PC-9 (cell line): ENCODE measurements at regions of chr10 and their contacts with region 1.

Region 1: GRCh38 chr10:69425511-69426298 is 9.0 kb upstream of the TACR2 start:
- DNase-seq: peak; percentile 69 to 98
- H3K4me3 ChIP-seq: no peak overlapping the region
- H3K27ac ChIP-seq: peak overlapping the region; percentile 44
- H3K4me1 ChIP-seq: peaks cover 28% of the 10 kb centered on the region
- H3K27me3 ChIP-seq: peaks cover 10% of the 10 kb centered on the region; the same call in 1 of the 2 replicates
- CTCF ChIP-seq: no peak

Region 2: DNA sequence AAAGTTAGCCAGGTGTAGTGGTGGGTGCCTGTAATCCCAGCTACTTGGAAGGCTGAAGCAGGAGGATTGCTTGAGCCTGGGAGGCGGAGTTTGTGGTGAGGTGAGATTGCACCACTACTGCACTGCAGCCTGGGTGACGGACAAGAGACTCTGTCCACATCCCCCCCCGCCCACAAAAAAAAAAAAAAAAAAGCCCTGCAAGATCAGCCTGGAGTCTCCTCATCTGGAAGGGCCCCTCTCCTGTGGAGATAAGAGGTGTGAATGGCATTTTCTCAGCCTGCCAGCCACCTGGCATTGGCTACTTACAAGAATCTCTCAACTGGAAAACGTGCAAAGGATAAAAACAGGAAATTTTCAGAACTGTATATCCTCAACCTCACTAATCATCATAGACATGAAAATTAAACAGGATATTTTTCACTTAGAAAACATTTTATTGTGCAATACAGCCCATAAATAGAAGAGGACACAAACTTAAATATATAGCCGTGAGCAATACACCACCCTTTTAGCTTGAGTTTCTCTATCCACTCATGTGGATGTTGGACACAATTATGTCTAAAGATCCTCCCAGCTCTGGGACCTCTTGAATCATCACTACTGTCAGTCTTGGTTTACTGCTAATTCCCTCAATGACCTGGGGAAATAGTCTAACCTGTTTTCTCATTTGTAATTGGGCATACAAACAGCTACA is 14.3 kb after region 1 on chr10:
- CTCF ChIA-PET with region 1: interaction called, 6 read pairs
- POLR2A ChIA-PET with region 1: interaction called, 6 read pairs
- intact Hi-C with region 1: loop called (anchors 1 kb)
- DNase-seq: peak; percentile 81 to 96
- H3K4me3 ChIP-seq: peak overlapping the region; percentile 42; the same call in 1 of the 2 replicates
- H3K27ac ChIP-seq: peak overlapping the region; percentile 96
- H3K4me1 ChIP-seq: peaks cover 69% of the 10 kb centered on the region
- H3K27me3 ChIP-seq: no peaks in the 10 kb centered on the region
- CTCF ChIP-seq: 0 out of 2 replicates have a peak, but pooled peaks have one; percentile 4

Region 3: DNA sequence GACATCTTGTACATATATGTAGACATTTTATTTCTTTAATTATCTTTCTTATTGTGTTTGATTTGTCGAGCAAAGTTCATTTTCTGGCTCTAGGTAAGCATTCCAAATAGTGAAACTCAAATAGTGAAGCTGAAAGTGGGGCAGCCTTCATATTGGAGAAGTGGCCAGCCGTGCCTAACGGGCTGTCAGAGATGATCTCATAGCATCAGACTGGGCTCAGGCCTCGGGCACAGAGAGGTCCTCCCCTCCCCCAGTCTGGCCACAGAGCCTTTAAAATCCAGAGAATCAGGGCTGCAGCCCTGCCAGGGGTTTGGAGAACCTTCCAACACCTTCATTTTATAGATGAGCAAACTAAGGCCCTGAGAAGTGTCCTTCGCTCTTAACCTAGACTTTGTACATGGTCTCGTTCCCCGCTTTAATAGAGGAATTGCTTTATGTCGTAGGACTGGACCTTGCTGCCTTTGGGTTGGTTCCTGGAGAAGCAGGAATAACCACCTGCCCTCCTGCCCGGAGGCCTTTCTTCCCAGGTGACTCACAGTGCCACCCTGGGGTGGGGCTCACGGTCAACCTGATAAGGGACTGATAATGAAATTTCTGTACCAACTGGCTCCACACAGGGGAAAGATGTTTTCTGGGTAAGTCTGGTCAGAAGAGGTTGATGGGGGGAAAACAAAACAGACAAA is 32.9 kb after region 1 on chr10:
- CTCF ChIA-PET with region 1: no interaction called
- POLR2A ChIA-PET with region 1: interaction called, 3 read pairs
- intact Hi-C with region 1: loop called (anchors 2 kb)
- DNase-seq: peak; percentile 97 to 98
- H3K4me3 ChIP-seq: peak overlapping the region; percentile 37
- H3K27ac ChIP-seq: peak overlapping the region; percentile 95
- H3K4me1 ChIP-seq: peaks cover 88% of the 10 kb centered on the region
- H3K27me3 ChIP-seq: no peaks in the 10 kb centered on the region
- CTCF ChIP-seq: no peak

Region 4: GRCh38 chr10:69515699-69516259 is 90.1 kb after region 1 on chr10:
- CTCF ChIA-PET with region 1: no interaction called
- POLR2A ChIA-PET with region 1: no interaction called
- intact Hi-C with region 1: loop called (anchors 2 kb)
- DNase-seq: peak; percentile 57 to 74
- H3K4me3 ChIP-seq: no peak overlapping the region
- H3K27ac ChIP-seq: no peak overlapping the region
- H3K4me1 ChIP-seq: no peaks in the 10 kb centered on the region
- H3K27me3 ChIP-seq: no peaks in the 10 kb centered on the region
- CTCF ChIP-seq: peak; percentile 95